B cell (primary cell): ENCODE measurements at regions of chr11 and their contacts with region 1.

Region 1: DNA sequence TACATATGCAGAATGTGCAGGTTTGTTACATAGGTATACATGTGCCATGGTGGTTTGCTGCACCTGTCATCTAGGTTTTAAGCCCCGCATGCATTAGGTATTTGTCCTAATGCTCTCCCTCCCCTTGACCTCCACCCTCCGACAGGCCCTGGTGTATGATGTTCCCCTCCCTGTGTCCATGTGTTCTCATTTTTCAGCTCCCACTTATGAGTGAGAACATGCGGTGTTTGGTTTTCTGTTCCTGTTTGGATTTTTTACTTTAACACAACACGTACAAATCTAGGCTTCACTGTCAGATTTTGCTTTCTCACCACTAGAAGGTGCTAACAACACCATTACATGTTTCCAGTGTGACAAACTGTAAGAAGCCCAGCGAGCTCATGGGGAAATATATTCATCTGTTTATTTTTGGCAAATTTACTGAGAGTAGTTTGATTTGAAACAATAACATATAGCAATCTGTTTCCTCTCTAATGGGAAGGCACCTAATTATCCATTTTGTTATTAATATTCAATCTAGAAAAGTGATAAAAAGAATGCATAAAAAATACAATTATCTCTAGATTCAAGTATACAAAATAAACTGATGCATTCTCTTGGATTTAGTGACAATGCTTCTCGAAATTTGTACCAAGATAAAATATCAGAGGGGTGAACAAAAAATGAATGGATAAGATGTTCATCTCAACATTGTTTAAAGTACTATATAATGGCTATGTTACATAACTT is 23.2 kb upstream of the BIRC3 start:
- DNase-seq: peak; percentile 84
- ATAC-seq: peak; percentile 88
- H3K4me3 ChIP-seq: peak overlapping the region in 4 of 5 experiments; percentile 9 to 48 (median 29)
- H3K4me3 Mint-ChIP-seq: peak overlapping the region; percentile 98
- H3K27ac ChIP-seq: peak overlapping the region; percentile 45 to 73
- H3K27ac Mint-ChIP-seq: peak overlapping the region; percentile 99
- H3K4me1 ChIP-seq: peaks cover 33 to 41% of the 10 kb centered on the region in 2 donors
- H3K4me1 Mint-ChIP-seq: peaks cover 77% of the 10 kb centered on the region
- H3K27me3 ChIP-seq: no peaks in the 10 kb centered on the region
- H3K27me3 Mint-ChIP-seq: no peaks in the 10 kb centered on the region
- CTCF ChIP-seq: peak; percentile 83

Region 2: GRCh38 chr11:102306048-102306585 is 12.1 kb after region 1 on chr11:
- CTCF ChIA-PET with region 1: interaction called, 588 read pairs
- POLR2A ChIA-PET with region 1: interaction called, 29 read pairs
- intact Hi-C with region 1: loop called (anchors 1 kb)
- DNase-seq: no peak
- ATAC-seq: peak; percentile 19
- H3K4me3 ChIP-seq: peak overlapping the region in 2 of 5 experiments; percentile 16 to 42
- H3K4me3 Mint-ChIP-seq: peak overlapping the region; percentile 60
- H3K27ac ChIP-seq: peak overlapping the region; percentile 82 to 92
- H3K27ac Mint-ChIP-seq: peak overlapping the region; percentile 93
- H3K4me1 ChIP-seq: peaks cover 69 to 78% of the 10 kb centered on the region in 2 donors
- H3K4me1 Mint-ChIP-seq: peaks cover 66% of the 10 kb centered on the region
- H3K27me3 ChIP-seq: no peaks in the 10 kb centered on the region
- H3K27me3 Mint-ChIP-seq: no peaks in the 10 kb centered on the region
- CTCF ChIP-seq: no peak

Region 3: GRCh38 chr11:102323542-102324251 is 29.7 kb after region 1 on chr11:
- CTCF ChIA-PET with region 1: interaction called, 588 read pairs
- POLR2A ChIA-PET with region 1: interaction called, 105 read pairs
- intact Hi-C with region 1: no loop called
- DNase-seq: no peak
- ATAC-seq: no peak
- H3K4me3 ChIP-seq: peak overlapping the region in 1 of 5 experiments; percentile 9
- H3K4me3 Mint-ChIP-seq: peak overlapping the region; percentile 32
- H3K27ac ChIP-seq: peak overlapping the region in 1 of 2 donors; percentile 98
- H3K27ac Mint-ChIP-seq: peak overlapping the region; percentile 65
- H3K4me1 ChIP-seq: peaks cover 38 to 50% of the 10 kb centered on the region in 2 donors
- H3K4me1 Mint-ChIP-seq: peaks cover 52% of the 10 kb centered on the region
- H3K27me3 ChIP-seq: no peaks in the 10 kb centered on the region
- H3K27me3 Mint-ChIP-seq: no peaks in the 10 kb centered on the region
- CTCF ChIP-seq: no peak

Region 4: GRCh38 chr11:102332611-102332994 is 38.6 kb after region 1 on chr11:
- CTCF ChIA-PET with region 1: interaction called, 24 read pairs
- POLR2A ChIA-PET with region 1: no interaction called
- intact Hi-C with region 1: no loop called
- DNase-seq: no peak
- ATAC-seq: no peak
- H3K4me3 ChIP-seq: no peak overlapping the region
- H3K4me3 Mint-ChIP-seq: no peak overlapping the region
- H3K27ac ChIP-seq: peak overlapping the region in 1 of 2 donors; percentile 64
- H3K27ac Mint-ChIP-seq: peak overlapping the region; percentile 47
- H3K4me1 ChIP-seq: peaks cover 0 to 3% of the 10 kb centered on the region in 2 donors
- H3K4me1 Mint-ChIP-seq: peaks cover 26% of the 10 kb centered on the region
- H3K27me3 ChIP-seq: no peaks in the 10 kb centered on the region
- H3K27me3 Mint-ChIP-seq: no peaks in the 10 kb centered on the region
- CTCF ChIP-seq: no peak

Region 5: GRCh38 chr11:102346748-102347461 is 52.9 kb after region 1 on chr11 and contains the start of gene BIRC2:
- CTCF ChIA-PET with region 1: interaction called, 295 read pairs
- POLR2A ChIA-PET with region 1: interaction called, 3 read pairs
- intact Hi-C with region 1: loop called (anchors 1 kb)
- DNase-seq: peak; percentile 98
- ATAC-seq: peak; percentile 88
- H3K4me3 ChIP-seq: peak within 1 kb of the TSS; percentile 63 to 98 (median 92)
- H3K4me3 Mint-ChIP-seq: peak within 1 kb of the TSS; percentile 90
- H3K27ac ChIP-seq: peak within 1 kb of the TSS; percentile 94 to 97
- H3K27ac Mint-ChIP-seq: peak within 1 kb of the TSS; percentile 98
- H3K4me1 ChIP-seq: peaks cover 14 to 21% of the 10 kb centered on the region in 2 donors
- H3K4me1 Mint-ChIP-seq: peaks cover 36% of the 10 kb centered on the region
- H3K27me3 ChIP-seq: no peaks in the 10 kb centered on the region
- H3K27me3 Mint-ChIP-seq: no peaks in the 10 kb centered on the region
- CTCF ChIP-seq: peak; percentile 73
- total RNA-seq, gene BIRC2: 46.7 and 51.0 TPM in 2 replicates

Region 6: GRCh38 chr11:104219096-104219495 is 1925.1 kb after region 1 on chr11:
- CTCF ChIA-PET with region 1: no interaction called
- POLR2A ChIA-PET with region 1: no interaction called
- intact Hi-C with region 1: no loop called
- DNase-seq: no peak
- ATAC-seq: no peak
- H3K4me3 ChIP-seq: no peak overlapping the region
- H3K4me3 Mint-ChIP-seq: no peak overlapping the region
- H3K27ac ChIP-seq: no peak overlapping the region
- H3K27ac Mint-ChIP-seq: no peak overlapping the region
- H3K4me1 ChIP-seq: no peaks in the 10 kb centered on the region
- H3K4me1 Mint-ChIP-seq: peaks cover 11% of the 10 kb centered on the region
- H3K27me3 ChIP-seq: no peaks in the 10 kb centered on the region
- H3K27me3 Mint-ChIP-seq: peaks cover 3% of the 10 kb centered on the region
- CTCF ChIP-seq: no peak